Activated T-helper 1 cell treated with anti-CD3 and anti-CD28 coated beads, Interleukin-12 subunit alpha, Interleukin-12 subunit beta, Interleukin-2, Interleukin-4 antibody, amounts not matched to agents 30 ng/mL and 10 ng/mL and 1 ng/mL, durations not matched to agents 14 hours and 24 hours and 36 hours (primary cell): ENCODE measurements at regions of chr17 and their contacts with region 1.

Region 1: DNA sequence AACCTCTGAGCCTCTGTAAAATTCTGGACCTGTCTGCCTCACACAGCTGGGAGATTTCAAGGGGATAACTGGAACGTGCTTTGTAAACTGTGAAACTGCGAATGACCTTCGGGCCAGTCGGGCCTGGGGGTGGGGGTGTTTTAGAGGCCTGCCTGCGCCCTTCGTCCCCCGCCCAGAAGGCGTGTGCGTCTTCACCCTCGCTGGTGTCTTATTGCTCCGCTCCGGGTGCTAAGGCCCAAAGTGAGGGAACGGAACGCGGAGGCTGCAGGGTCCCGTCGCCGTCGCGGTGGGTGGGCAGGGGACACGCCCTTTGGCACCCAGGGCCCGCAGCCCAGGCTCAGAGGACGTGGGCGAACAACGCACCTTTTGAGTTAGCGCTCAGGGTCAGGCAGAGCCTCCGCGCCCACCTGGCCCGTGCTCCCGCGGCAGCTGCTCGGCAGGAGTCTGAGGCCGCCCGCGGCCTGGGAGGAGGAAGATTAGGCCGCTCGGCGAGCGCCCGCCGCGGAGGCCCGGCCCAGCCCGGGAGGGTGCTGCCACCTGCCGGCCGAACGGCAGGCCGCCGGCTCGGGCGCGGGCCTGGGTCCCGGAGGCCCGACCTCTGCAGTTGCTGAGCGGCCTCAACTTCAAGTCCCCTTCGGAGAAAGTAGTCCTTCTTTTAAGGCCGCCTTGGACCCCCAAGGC is 29.7 kb downstream of the DCAKD start:
- DNase-seq: peak; percentile 62
- H3K4me3 Mint-ChIP-seq: no peak overlapping the region
- H3K27ac Mint-ChIP-seq: no peak overlapping the region
- H3K4me1 Mint-ChIP-seq: peaks cover 22% of the 10 kb centered on the region
- H3K27me3 Mint-ChIP-seq: peaks cover 30% of the 10 kb centered on the region

Region 2: DNA sequence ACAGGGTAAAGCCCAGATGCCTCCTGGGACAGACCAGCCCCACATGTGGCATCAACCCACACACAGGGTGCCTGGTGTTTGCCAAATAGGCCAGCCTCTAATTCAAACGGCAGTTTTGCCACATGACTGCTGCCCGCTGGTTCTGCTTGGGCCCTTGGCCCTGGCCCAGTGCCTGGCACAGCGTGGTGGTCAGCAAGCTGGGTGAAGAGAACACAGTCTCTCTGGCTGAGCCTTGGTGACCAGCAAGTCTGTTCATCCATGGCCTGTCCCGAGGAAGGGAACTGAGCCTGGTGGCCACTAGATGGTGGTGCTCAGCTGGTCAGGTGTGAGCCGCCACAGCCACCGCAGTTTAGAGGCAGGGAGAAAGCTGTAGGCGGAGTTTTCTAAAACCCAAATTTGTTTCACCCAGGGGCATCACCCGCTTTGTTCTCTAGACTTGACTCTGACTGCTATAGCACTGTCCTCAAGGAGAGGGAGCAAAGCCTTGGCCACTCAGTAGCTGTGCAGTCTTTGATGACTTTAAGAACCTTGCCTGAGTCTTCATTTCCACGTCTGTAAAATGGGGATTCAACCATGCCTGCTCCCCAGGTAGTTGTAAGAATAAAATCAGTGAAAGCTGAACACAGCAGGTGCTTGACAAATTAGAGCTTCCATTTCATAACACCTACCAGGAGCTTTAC is 101.7 kb before region 1 on chr17:
- intact Hi-C with region 1: loop called (anchors 1 kb)
- DNase-seq: peak; percentile 50
- H3K4me3 Mint-ChIP-seq: no peak overlapping the region
- H3K27ac Mint-ChIP-seq: no peak overlapping the region
- H3K4me1 Mint-ChIP-seq: peaks cover 8% of the 10 kb centered on the region
- H3K27me3 Mint-ChIP-seq: peaks cover 25% of the 10 kb centered on the region